ENCODE measurements at regions of chr1 and their contacts with region 1.

Region 1: GRCh38 chr1:44786138-44786840 is 1.7 kb downstream of the BEST4 start:
- DNase-seq: peak; percentile 88

Region 2: DNA sequence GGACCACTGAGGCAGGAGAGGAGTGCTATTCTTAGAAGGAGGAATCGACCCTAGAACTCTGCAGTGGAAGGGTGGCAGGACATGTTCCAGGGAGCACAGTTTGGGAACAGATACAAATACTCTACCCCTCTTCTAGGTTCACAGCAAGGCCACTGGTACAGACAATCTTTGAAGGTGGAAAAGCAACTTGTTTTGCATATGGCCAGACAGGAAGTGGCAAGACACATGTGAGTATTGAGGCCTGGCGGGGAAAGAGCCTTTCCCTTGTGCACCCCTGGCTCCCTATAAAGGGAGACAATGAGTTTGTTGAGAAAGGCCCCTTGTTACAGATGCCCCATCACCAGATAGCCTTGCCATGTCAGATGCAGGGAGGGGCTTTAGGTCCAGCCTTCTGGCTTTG is 28.9 kb before region 1 on chr1:
- intact Hi-C with region 1: no loop called
- DNase-seq: no peak

Region 3: DNA sequence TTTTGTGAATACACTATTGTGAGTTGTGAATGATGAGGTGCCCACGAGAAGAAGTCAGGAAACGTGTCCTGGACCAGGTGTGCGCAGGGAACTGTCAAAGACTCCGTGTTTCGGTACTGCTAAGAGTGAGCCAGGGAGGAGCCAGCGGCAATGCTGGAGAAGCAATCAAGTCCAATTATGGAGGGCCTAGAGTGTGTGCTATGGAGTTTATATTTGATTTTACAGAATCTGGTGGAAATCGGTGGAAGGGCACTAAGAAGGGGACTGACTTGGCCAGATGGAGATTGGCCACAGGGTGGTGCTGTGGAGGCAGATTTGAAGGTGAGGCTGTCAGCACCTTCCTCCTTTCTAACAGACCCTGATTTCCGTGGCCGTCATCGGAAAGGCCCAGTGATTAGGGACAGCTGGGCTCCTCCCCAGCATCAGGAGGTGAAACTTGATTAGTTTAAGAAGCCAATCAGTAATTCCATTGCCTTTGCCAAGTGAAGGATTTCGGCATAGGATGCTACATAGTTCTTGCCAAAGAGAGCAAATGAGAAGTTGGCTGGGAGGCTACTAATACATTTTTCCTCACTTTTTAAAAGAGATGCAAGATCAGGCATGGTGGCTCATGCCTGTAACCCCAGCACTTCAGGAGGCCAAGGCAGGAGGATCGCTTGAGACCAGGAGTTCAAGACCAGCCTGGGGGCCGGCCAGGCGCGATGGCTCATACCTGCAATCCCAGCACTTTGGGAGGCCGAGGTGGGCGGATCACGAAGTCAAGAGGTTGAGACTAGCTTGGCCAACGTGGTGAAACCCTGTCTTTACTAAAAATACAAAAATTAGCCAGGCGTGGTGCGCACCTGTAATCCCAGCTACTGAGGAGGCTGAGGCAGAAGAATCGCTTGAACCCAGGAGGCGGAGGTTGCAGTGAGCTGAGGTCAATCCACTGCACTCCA is 49.7 kb after region 1 on chr1:
- intact Hi-C with region 1: loop called (anchors 5 to 10 kb)
- DNase-seq: peak; percentile 96